T-cell (primary cell): ENCODE measurements at regions of chr10 and their contacts with region 1.

Region 1: DNA sequence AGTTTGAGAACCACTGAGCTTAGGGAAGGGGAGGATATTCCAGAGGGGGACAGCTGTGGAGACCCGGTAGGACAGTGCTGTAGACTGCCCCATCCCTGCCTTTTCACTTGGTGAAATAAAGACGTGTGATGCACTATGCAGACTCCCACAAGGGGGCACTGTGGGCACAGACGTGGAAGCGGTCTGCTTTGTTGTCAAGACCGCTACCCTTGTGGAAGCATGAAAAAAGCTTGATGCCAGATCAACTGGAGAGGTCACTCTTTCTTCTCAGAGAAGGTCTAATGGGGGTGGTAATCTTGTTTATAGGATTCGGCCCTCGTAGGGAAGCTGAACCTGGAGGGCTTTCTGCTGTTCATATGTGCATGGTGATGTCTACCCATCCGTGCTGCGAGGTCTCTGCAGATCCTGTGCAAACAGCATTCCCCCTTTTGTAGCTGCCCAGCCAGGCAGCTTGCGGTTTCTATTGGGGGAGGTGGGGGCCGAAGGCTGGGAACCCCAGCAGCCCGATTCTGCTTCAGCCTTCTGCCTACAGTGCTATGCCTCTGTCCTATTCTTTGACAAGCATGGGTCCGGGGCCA is 13.7 kb downstream of the RPS24 start:
- DNase-seq: peak; percentile 51 to 86 (median 77)
- ATAC-seq: peak; percentile 79 to 82 (median 80)
- H3K4me3 ChIP-seq: no peak overlapping the region
- H3K4me3 Mint-ChIP-seq: no peak overlapping the region
- H3K27ac ChIP-seq: no peak overlapping the region
- H3K27ac Mint-ChIP-seq: no peak overlapping the region
- H3K4me1 ChIP-seq: peaks cover 0 to 10% of the 10 kb centered on the region in 2 experiments
- H3K4me1 Mint-ChIP-seq: peaks cover 8 to 25% (median 15%) of the 10 kb centered on the region in 3 donors
- H3K27me3 ChIP-seq: no peaks in the 10 kb centered on the region
- H3K27me3 Mint-ChIP-seq: no peaks in the 10 kb centered on the region

Region 2: GRCh38 chr10:78033637-78034470 is 13.5 kb before region 1 on chr10 and contains the start of gene RPS24:
- CTCF ChIA-PET with region 1: interaction called, 4 to 11 read pairs
- POLR2A ChIA-PET with region 1: interaction called, 3 to 5 read pairs
- DNase-seq: peak; percentile 88 to 98 (median 94)
- ATAC-seq: peak; percentile 87 to 93 (median 90)
- H3K4me3 ChIP-seq: peak within 1 kb of the TSS; percentile 91 to 95
- H3K4me3 Mint-ChIP-seq: peak within 1 kb of the TSS; percentile 86 to 91 (median 86)
- H3K27ac ChIP-seq: peak within 1 kb of the TSS; percentile 48
- H3K27ac Mint-ChIP-seq: peak within 1 kb of the TSS; percentile 73 to 88
- H3K4me1 ChIP-seq: peaks cover 28 to 44% of the 10 kb centered on the region in 2 experiments
- H3K4me1 Mint-ChIP-seq: peaks cover 49 to 60% (median 60%) of the 10 kb centered on the region in 3 donors
- H3K27me3 ChIP-seq: no peaks in the 10 kb centered on the region
- H3K27me3 Mint-ChIP-seq: no peaks in the 10 kb centered on the region
- total RNA-seq, gene RPS24: 1,070 to 1,783 (median 1,384) TPM

Region 3: DNA sequence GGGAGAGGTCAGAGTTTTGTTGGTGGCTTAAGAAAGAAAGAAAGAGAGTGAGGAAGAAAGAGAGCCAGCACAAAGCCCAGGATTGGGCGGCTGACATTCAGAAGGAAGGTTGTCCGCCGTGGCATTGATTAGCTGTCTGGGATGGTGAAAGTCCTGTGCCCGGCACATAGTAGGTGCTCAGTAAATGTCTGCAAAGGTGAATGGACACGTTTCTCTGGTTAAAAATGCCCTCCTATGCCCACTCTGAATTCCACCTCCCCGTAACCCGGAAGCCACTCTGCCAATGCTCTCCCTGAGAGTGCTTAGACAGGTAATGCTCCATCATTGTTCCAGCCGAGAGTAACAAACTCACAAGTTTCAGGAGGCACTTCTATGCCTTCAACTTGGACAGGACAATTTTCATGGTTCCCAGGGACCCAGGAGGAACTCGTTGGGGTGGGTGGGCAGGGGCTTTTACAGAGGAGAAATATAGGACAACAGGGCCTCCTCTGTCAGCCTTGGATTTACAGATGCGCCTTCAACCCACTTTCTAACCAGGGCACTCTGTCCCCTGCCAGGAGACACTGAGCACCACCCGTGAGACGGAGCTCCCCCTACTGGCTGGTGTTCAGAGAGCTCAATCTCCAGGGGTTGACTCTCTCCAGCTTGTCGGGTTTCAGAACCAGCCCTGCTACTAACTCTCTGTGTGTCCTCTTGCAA is 609.9 kb after region 1 on chr10:
- CTCF ChIA-PET with region 1: interaction called, 4 to 10 read pairs
- POLR2A ChIA-PET with region 1: no interaction called
- DNase-seq: peak in 34 of 35 experiments; percentile 15 to 64 (median 46)
- ATAC-seq: peak in 3 of 4 experiments; percentile 50 to 59 (median 54)
- H3K4me3 ChIP-seq: no peak overlapping the region
- H3K4me3 Mint-ChIP-seq: no peak overlapping the region
- H3K27ac ChIP-seq: no peak overlapping the region
- H3K27ac Mint-ChIP-seq: no peak overlapping the region
- H3K4me1 ChIP-seq: no peaks in the 10 kb centered on the region
- H3K4me1 Mint-ChIP-seq: no peaks in the 10 kb centered on the region
- H3K27me3 ChIP-seq: peaks cover 0 to 28% of the 10 kb centered on the region in 2 experiments
- H3K27me3 Mint-ChIP-seq: peaks cover 10 to 16% of the 10 kb centered on the region in 2 donors

Region 4: GRCh38 chr10:78935697-78936407 is 888.4 kb after region 1 on chr10:
- CTCF ChIA-PET with region 1: interaction called in 1 of 2 experiments, 10 read pairs
- POLR2A ChIA-PET with region 1: no interaction called
- DNase-seq: no peak
- ATAC-seq: no peak
- H3K4me3 ChIP-seq: no peak overlapping the region
- H3K4me3 Mint-ChIP-seq: no peak overlapping the region
- H3K27ac ChIP-seq: no peak overlapping the region
- H3K27ac Mint-ChIP-seq: no peak overlapping the region
- H3K4me1 ChIP-seq: no peaks in the 10 kb centered on the region
- H3K4me1 Mint-ChIP-seq: peaks cover 0 to 2% (median 0%) of the 10 kb centered on the region in 3 donors
- H3K27me3 ChIP-seq: peaks cover 0 to 23% of the 10 kb centered on the region in 2 experiments
- H3K27me3 Mint-ChIP-seq: peaks cover 0 to 2% of the 10 kb centered on the region in 2 donors

Region 5: GRCh38 chr10:79195091-79195923 is 1147.9 kb after region 1 on chr10:
- CTCF ChIA-PET with region 1: interaction called, 48 to 75 read pairs
- POLR2A ChIA-PET with region 1: no interaction called
- DNase-seq: peak; percentile 36 to 86 (median 70)
- ATAC-seq: peak; percentile 77 to 90 (median 83)
- H3K4me3 ChIP-seq: no peak overlapping the region
- H3K4me3 Mint-ChIP-seq: no peak overlapping the region
- H3K27ac ChIP-seq: no peak overlapping the region
- H3K27ac Mint-ChIP-seq: no peak overlapping the region
- H3K4me1 ChIP-seq: peaks cover 0 to 14% of the 10 kb centered on the region in 2 experiments
- H3K4me1 Mint-ChIP-seq: peaks cover 0 to 8% (median 5%) of the 10 kb centered on the region in 3 donors
- H3K27me3 ChIP-seq: peaks cover 0 to 11% of the 10 kb centered on the region in 2 experiments
- H3K27me3 Mint-ChIP-seq: no peaks in the 10 kb centered on the region